Left ventricle myocardium inferior (tissue), 1 donor: ENCODE measurements at regions of chr10 and their contacts with region 1.

Region 1: DNA sequence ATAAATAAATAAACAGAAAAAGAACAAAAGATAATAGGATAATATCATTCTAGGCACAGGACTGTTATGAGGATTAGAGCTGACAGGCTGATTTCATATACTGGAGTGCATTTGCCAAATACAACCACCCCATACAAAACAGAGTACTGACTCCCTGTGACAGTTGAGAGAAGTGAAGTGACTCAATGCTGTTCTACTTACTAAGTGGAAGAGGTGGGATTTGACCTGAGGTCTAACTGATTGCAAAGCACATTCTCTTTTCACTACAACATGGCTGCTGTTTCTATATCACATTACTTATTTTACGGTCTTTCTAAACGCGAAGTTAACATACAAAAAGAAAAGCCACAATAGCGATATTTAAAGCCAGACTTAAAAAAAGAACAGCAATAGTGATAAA is 51.4 kb downstream of the ITGB1 start:
- DNase-seq: no peak
- H3K4me3 ChIP-seq: no peak overlapping the region
- H3K27ac ChIP-seq: no peak overlapping the region
- H3K4me1 ChIP-seq: peaks cover 20% of the 10 kb centered on the region
- H3K27me3 ChIP-seq: no peaks in the 10 kb centered on the region
- CTCF ChIP-seq: no peak

Region 2: DNA sequence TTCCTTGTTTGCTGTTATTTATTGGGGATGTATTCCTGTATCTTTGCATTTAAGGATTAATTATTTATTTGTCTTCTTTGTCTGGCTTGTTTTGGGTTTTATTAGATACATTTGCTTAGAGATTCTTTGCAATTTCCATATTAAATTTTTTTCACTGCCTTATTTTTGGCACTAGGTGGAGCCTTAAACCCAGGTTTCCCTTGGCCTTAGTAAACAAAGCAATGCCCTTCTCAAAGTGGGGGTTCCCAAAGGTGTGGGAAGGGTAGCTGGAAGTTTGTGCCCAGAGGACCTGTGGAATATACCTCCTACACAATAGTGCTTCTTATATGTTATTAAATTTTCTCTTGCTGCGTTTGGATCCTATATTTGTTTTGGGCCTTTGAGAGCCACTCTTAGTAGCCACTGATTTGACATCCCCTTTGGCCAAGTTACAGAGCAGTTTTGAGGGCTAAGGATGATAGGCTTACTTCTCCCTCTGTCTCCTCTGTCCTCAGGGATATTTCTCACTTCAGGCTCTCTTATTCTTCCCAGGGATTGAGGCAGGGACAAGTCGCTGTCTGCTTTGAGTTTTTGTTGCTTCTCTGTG is 110.9 kb before region 1 on chr10:
- intact Hi-C with region 1: no loop called
- DNase-seq: no peak
- H3K4me3 ChIP-seq: no peak overlapping the region
- H3K27ac ChIP-seq: no peak overlapping the region
- H3K4me1 ChIP-seq: no peaks in the 10 kb centered on the region
- H3K27me3 ChIP-seq: no peaks in the 10 kb centered on the region
- CTCF ChIP-seq: peak; percentile 81

Region 3: DNA sequence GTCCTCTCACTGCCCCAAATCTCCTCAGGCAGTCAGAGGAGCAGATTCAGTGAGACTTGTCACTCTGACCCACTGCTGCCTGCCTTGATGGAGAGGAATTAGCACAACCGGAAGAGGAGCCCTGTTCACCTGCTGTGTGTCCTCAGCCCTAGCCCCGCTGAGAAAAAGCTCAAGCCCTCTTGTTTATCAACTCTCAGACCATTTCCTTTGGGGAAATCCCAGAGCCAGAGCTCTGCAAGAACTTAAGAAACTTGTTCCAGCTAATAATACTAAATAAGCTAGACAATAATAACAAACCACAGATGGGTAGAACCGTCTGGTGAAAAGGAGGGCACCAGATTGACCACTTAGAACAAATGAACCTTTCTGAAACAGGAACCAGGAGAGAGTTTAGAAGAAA is 89.2 kb after region 1 on chr10:
- intact Hi-C with region 1: loop called (anchors 10 kb)
- DNase-seq: no peak
- H3K4me3 ChIP-seq: no peak overlapping the region
- H3K27ac ChIP-seq: peak overlapping the region; percentile 74
- H3K4me1 ChIP-seq: peaks cover 13% of the 10 kb centered on the region
- H3K27me3 ChIP-seq: no peaks in the 10 kb centered on the region
- CTCF ChIP-seq: no peak